ENCODE measurements at regions of chr2 and their contacts with region 1.

Region 1: DNA sequence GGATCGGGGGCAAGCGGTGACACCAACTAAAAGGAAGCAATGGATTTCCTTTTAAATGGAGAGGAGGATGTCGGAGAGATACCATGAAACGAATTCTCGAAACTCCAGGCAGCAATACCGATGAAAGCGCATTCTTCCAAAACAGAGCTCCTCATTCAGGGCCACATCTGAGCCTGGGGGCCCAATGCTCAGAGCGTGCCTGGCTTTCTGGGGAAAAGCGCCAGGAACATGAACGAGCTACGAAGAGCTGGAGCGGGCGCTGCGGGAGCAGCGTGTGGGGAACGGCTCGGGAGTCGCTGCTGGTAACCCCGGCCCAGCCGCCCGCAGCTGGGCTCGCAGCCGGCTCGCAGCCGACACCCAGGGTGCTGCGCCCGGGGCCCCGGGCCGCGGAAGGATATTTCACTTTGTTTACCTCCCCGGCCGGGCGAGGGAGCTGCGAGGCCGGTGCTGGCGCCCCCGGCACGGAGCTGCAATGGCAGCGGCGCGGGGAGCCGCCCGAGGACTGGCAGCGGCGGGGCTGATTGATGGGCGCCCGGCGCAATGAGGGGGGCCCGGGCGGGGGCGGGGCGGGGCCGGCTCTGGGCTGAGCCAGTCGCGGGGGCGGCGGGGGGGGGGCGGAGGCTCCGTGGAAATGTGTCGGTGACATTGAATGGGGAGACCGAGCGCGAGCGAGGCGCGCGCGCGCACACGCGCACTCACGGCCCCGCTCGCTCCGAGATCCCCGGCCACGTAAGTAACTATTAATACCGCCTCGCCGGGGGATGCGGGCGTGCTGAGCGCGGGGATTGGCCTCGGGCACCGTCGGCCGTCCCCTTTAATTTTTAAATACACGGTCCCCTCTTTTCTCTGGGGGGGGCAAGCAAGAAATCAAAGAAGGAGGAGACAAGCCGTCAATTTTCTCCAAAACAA is at the start of gene TRIB2:
- DNase-seq: peak; percentile 88 to 96 (median 94)
- ATAC-seq: peak; percentile 78
- H3K4me3 ChIP-seq: peak within 1 kb of the TSS; percentile 64
- H3K27ac ChIP-seq: peak within 1 kb of the TSS; percentile 86
- H3K4me1 ChIP-seq: peaks cover 13 to 30% of the 10 kb centered on the region in 2 experiments; a peak in 4 of 5 replicates
- H3K27me3 ChIP-seq: no peaks in the 10 kb centered on the region
- CTCF ChIP-seq: peak; percentile 19 to 46 (median 35); a peak in 4 of 6 replicates
- EP300 ChIP-seq: no peak
- POLR2A ChIP-seq: peak; percentile 73
- RAD21 ChIP-seq: no peak; a peak in 2 of 4 replicates
- polyA plus RNA-seq, gene TRIB2: 9.0 to 12.2 TPM

Region 2: DNA sequence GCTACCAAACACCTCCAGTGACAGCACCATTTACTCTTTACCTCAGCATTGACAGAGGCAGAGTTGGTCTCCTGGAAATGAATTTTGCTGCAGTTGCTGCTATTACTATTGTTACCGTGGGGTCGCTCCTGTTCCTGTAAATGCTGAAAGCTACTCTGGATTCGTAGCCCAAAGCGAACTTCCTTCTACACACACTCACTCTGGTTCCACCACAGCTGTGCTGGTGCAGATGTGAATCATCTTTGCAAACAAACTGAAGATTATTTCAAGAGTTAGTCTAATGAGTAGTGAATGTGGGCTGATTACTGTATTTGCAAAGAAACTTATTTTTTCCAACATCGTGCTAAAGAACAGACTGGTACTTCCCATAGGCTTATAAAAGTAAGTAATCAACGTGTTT is 666.1 kb before region 1 on chr2:
- CTCF ChIA-PET with region 1: no interaction called
- POLR2A ChIA-PET with region 1: no interaction called
- in situ Hi-C with region 1: no loop called
- intact Hi-C with region 1: loop called (anchors 5 kb)
- DNase-seq: peak in 2 of 4 experiments; percentile 51 to 69
- ATAC-seq: peak; percentile 87
- H3K4me3 ChIP-seq: no peak overlapping the region
- H3K27ac ChIP-seq: no peak overlapping the region
- H3K4me1 ChIP-seq: peaks cover 0 to 7% of the 10 kb centered on the region in 2 experiments; a peak in 2 of 5 replicates
- H3K27me3 ChIP-seq: no peaks in the 10 kb centered on the region
- CTCF ChIP-seq: peak; percentile 50 to 73 (median 52)
- EP300 ChIP-seq: peak; percentile 40; the same call in 1 of the 2 replicates
- POLR2A ChIP-seq: no peak
- RAD21 ChIP-seq: peak; percentile 60 to 73

Region 3: DNA sequence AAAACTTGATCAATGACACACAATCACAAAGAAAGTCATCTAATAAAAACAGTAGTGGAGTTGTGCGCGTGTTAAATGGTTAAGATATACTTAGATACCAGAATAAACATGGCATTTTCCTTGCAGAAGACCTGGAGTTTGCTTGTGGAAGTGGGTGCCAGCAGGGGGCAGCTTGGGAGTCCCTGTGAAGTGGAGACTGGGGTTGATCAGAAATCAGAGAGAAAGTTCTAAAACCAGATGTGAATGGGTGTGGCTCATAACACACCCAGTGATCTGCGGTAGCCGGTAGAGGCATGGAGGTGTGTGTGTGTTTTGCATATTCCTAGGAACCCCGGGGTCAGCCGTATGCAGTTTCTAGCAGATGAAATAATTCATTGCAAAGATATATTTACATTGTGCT is 299.9 kb before region 1 on chr2:
- CTCF ChIA-PET with region 1: interaction called, 3 read pairs
- POLR2A ChIA-PET with region 1: interaction called, 7 read pairs
- in situ Hi-C with region 1: loop called (anchors 5 kb)
- intact Hi-C with region 1: loop called (anchors 1 kb)
- DNase-seq: peak; percentile 45 to 78 (median 59)
- ATAC-seq: peak; percentile 94
- H3K4me3 ChIP-seq: no peak overlapping the region
- H3K27ac ChIP-seq: no peak overlapping the region
- H3K4me1 ChIP-seq: peaks cover 0 to 5% of the 10 kb centered on the region in 2 experiments; a peak in 2 of 5 replicates
- H3K27me3 ChIP-seq: no peaks in the 10 kb centered on the region
- CTCF ChIP-seq: peak; percentile 66 to 77 (median 69)
- EP300 ChIP-seq: no peak
- POLR2A ChIP-seq: no peak
- RAD21 ChIP-seq: peak; percentile 60 to 73

Region 4: GRCh38 chr2:12501469-12502158 is 214.9 kb before region 1 on chr2:
- CTCF ChIA-PET with region 1: no interaction called
- POLR2A ChIA-PET with region 1: no interaction called
- in situ Hi-C with region 1: no loop called
- intact Hi-C with region 1: no loop called
- DNase-seq: no peak
- ATAC-seq: peak; percentile 36; the same call in 1 of the 3 replicates
- H3K4me3 ChIP-seq: no peak overlapping the region
- H3K27ac ChIP-seq: no peak overlapping the region
- H3K4me1 ChIP-seq: peaks cover 0 to 3% of the 10 kb centered on the region in 2 experiments; a peak in 2 of 5 replicates
- H3K27me3 ChIP-seq: no peaks in the 10 kb centered on the region
- CTCF ChIP-seq: no peak
- EP300 ChIP-seq: no peak
- POLR2A ChIP-seq: no peak
- RAD21 ChIP-seq: no peak

Region 5: DNA sequence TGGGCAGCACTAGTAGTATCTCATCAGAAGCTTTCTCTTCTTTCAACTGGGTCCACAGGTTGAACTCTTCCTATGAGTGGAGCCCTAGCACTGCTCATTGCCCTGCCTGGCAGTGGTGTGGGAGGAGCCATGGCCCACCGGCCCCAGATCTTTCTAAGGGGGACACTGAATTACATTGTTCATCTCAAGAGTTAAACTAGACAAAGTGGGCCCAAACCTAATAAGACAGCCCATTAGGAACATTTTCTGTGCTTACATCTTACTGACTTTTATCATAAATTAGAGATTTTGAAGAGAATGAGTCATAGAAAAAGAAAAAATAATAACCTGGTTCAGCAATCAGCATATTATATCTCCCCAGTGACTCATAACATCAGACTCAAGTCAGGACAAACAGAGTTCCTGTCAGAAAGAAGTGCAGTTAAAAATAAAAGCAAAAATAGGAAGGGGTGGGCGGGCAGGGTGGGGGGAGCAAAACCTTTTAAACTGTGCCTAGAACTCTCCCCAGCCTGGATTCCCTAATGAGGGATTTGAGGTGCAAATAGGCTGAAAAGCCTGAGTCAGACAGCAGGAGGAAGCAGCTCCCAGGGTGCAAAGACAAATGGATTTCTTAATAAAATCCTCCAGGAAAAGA is 161.4 kb before region 1 on chr2:
- CTCF ChIA-PET with region 1: no interaction called
- POLR2A ChIA-PET with region 1: interaction called, 3 read pairs
- in situ Hi-C with region 1: no loop called
- intact Hi-C with region 1: loop called (anchors 5 kb)
- DNase-seq: peak; percentile 22 to 26 (median 23)
- ATAC-seq: peak; percentile 45; the same call in 2 of the 3 replicates
- H3K4me3 ChIP-seq: no peak overlapping the region
- H3K27ac ChIP-seq: no peak overlapping the region
- H3K4me1 ChIP-seq: peaks cover 0 to 21% of the 10 kb centered on the region in 2 experiments; a peak in 4 of 5 replicates
- H3K27me3 ChIP-seq: no peaks in the 10 kb centered on the region
- CTCF ChIP-seq: 0 out of 6 replicates have a peak, but pooled peaks of 1 of the 3 experiments have one; percentile 17
- EP300 ChIP-seq: no peak
- POLR2A ChIP-seq: no peak
- RAD21 ChIP-seq: no peak

Region 6: DNA sequence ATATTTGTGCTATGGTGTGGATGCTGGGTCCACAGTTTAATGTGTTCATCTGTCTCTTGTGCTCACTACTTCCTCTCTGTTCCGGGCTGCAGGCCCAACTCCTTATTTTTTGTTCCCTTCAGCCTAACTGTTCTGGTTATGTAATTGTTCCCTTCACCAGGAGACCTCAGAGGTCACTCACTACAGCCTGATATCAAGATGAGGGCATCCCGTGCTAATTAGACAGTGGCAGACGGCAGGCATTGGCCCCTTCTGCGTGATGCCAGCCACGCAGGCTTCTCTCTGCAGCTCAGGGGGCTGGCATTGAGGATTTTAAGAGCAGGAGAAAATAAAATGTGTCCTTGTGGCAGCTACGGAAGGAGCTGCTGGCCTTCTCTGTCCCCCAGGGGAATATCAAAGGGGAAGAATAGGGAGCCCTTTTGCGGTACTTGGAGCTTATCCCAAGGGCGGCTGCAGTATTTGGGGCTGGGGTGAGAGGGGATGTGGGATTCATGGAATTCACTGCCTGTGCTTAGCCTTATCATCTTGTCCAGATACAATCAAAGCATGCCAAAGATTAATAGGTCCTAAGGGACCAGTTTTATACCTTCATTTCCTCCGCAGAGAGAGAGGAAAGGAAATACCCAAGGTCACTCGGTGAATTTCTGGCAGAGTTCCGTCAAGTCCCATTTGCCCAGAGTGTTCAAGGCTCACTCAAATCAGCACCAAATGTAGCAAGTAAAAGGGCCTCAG is 53.1 kb before region 1 on chr2:
- CTCF ChIA-PET with region 1: no interaction called
- POLR2A ChIA-PET with region 1: no interaction called
- in situ Hi-C with region 1: no loop called
- intact Hi-C with region 1: no loop called
- DNase-seq: no peak
- ATAC-seq: no peak
- H3K4me3 ChIP-seq: no peak overlapping the region
- H3K27ac ChIP-seq: no peak overlapping the region
- H3K4me1 ChIP-seq: no peaks in the 10 kb centered on the region
- H3K27me3 ChIP-seq: no peaks in the 10 kb centered on the region; a peak in 1 of 5 replicates
- CTCF ChIP-seq: no peak
- EP300 ChIP-seq: no peak
- POLR2A ChIP-seq: no peak
- RAD21 ChIP-seq: no peak

Region 7: DNA sequence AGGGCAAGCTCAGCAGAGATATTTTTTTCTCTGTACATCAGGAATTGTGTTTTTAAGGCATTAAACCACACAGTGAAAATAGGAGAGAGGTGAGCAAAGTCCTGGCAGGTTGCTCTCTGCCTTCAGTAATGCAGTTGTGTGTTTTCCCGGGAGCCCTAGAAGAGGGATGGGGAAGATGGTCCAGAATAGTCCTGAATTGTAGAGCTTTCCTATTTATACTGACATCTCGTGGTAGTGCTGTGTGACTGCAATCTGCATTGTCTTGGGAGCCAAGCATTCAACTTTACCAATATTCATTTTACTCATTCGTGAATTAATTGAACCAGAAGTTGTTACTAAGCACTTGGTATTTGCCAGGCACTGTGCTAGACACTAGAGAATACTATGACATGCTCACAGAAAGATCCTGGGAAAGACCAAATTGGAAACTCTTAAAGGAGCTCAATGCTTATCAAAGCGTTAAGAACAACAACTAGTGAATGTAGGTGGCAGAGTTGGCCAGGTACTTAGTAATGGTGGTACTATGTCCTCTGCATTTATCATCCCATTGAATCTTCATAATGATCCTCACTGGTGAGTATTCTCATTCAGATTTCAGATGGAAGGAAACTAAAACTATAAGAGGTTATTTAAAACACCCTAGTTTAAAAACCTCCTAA is 214.8 kb after region 1 on chr2:
- CTCF ChIA-PET with region 1: no interaction called
- POLR2A ChIA-PET with region 1: no interaction called
- in situ Hi-C with region 1: no loop called
- intact Hi-C with region 1: loop called (anchors 1 kb)
- DNase-seq: peak in 3 of 4 experiments; percentile 9 to 44 (median 27)
- ATAC-seq: peak; percentile 84
- H3K4me3 ChIP-seq: no peak overlapping the region
- H3K27ac ChIP-seq: no peak overlapping the region
- H3K4me1 ChIP-seq: no peaks in the 10 kb centered on the region; a peak in 2 of 5 replicates
- H3K27me3 ChIP-seq: peaks cover 0 to 3% of the 10 kb centered on the region in 2 experiments; a peak in 1 of 5 replicates
- CTCF ChIP-seq: peak; percentile 58 to 69 (median 68)
- EP300 ChIP-seq: no peak
- POLR2A ChIP-seq: no peak
- RAD21 ChIP-seq: peak; percentile 56 to 71